GM13977 (cell line): ENCODE measurements at regions of chr7 and their contacts with region 1.

Region 1: GRCh38 chr7:100342765-100343164 is 15.2 kb upstream of the PILRB start:
- DNase-seq: no peak
- CTCF ChIP-seq: no peak

Region 2: DNA sequence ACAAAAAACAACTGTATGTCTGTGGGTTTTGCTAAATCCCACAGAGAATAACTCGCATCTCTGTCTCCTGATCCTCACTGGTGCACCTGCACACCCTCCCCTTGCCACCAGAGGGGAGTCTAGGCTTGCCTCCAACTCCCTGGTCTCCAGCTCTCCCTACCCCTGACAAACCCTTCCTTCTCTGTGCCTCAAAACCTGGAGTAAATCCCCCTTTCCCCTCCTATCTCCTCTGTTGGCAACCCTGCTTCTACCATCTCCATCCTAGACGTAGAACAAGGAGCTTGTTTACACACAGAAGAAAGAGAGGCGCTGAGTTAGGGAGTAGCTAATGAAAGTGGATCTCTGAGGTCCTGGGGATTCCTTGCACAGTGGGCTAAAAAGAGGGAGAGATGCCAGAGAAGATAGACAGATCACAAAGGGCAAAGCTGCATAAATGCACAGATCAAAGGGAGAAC is 210.0 kb before region 1 on chr7:
- in situ Hi-C with region 1: loop called (anchors 10 kb)
- DNase-seq: peak; percentile 80
- CTCF ChIP-seq: peak; percentile 97

Region 3: GRCh38 chr7:100483101-100483721 is 140.4 kb after region 1 on chr7:
- in situ Hi-C with region 1: no loop called
- DNase-seq: peak; percentile 92
- CTCF ChIP-seq: peak; percentile 93

Region 4: DNA sequence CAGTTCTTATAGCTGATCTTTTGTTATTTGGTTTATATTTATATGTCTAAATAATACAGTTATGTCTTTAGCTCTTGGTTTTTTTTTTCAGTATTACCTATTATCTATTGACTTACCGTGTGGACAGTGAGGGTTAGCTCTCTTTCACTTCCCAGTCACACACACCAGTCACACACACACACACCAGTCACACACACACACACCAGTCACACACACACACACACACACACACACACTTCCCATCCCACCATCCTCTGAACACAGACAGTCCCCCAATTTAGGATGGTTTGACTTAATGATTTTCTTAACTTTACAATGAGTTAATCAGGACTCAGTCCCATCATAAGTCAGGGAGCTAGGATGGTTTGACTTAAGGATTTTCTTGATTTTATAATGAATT is 177.4 kb after region 1 on chr7:
- in situ Hi-C with region 1: no loop called
- DNase-seq: no peak
- CTCF ChIP-seq: no peak

Region 5: DNA sequence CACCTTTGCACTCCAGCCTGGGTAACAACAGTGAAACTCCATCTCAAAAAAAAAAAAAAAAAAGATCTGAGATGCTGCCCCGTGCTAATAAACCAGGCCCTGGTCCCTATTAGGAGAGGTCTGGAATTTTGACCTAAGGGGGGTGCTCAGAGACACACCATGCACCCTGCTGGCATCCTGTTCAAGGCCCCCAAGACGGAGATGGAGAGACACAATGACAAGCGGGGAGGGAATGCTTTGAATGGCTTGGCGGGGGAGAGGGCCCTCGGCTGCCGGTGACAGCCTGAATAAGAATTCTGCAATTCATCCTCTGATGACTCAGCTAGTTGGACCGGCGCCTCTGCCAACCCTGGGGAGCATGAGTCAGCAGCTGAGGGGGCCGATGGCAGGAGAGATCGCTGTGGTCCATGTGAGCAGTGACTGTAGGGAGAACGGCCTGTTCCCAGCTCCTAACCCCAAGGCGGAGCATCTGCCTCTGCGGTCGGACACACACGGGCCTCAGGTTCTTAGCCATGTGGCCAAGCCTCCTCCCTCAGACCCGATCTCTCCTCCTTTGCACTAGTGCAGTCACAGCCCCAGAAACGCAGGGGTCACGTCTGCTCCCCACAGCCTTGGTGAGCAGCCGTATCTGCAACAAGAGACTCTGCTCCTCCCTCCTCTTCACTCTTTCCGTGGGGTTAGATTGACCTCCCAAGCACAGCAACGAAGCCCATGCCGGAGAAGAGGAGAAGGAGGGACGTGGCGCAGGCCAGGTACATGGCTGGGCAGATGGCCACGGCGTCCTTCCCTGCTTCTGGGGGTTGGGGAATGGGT is 757.4 kb after region 1 on chr7:
- in situ Hi-C with region 1: no loop called
- DNase-seq: no peak
- CTCF ChIP-seq: no peak